ENCODE measurements at regions of chr10 and their contacts with region 1.

Region 1: GRCh38 chr10:49538381-49539319 is at the start of gene ERCC6:
- DNase-seq: peak; percentile 98 to 99
- H3K4me3 ChIP-seq: peak within 1 kb of the TSS; percentile 82 to 89
- H3K27ac ChIP-seq: peak within 1 kb of the TSS; percentile 89 to 94
- H3K4me1 ChIP-seq: peaks cover 0 to 49% (median 18%) of the 10 kb centered on the region in 4 donors
- H3K27me3 ChIP-seq: no peaks in the 10 kb centered on the region
- CTCF ChIP-seq: peak in 1 of 2 experiments; percentile 4

Region 2: DNA sequence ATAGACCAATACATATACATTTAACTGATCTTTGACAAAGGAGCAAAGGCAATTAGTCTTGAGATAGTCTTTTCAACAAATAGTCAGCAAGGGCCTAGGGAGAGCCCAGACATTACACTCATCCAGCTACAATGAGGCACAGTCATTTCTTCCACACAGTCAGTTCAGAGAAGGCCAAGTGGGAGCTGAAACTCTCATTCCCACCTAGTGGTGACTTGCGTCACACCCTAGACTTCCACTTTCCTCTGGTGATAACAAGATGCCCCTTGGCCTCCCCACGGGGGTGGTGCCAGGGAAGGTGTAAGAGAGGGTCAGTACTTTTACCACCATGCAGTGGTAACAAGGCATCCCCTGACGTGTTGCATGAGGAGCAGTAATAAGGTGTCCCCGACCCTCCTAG is 1272.1 kb before region 1 on chr10:
- intact Hi-C with region 1: loop called (anchors 5 kb)
- DNase-seq: no peak
- H3K4me3 ChIP-seq: no peak overlapping the region
- H3K27ac ChIP-seq: no peak overlapping the region
- H3K4me1 ChIP-seq: no peaks in the 10 kb centered on the region
- H3K27me3 ChIP-seq: no peaks in the 10 kb centered on the region
- CTCF ChIP-seq: no peak

Region 3: GRCh38 chr10:49335364-49335972 is 203.2 kb before region 1 on chr10:
- intact Hi-C with region 1: no loop called
- DNase-seq: no peak
- H3K4me3 ChIP-seq: no peak overlapping the region
- H3K27ac ChIP-seq: no peak overlapping the region
- H3K4me1 ChIP-seq: no peaks in the 10 kb centered on the region
- H3K27me3 ChIP-seq: no peaks in the 10 kb centered on the region
- CTCF ChIP-seq: no peak